Stomach (tissue), 19 donors: ENCODE measurements at regions of chr18 and their contacts with region 1.

Region 1: GRCh38 chr18:37385846-37386778 is 179.5 kb downstream of the CELF4 start:
- DNase-seq: no peak
- H3K4me3 ChIP-seq: no peak overlapping the region
- H3K27ac ChIP-seq: no peak overlapping the region
- H3K4me1 ChIP-seq: no peaks in the 10 kb centered on the region
- H3K27me3 ChIP-seq: peaks cover 0 to 15% (median 8%) of the 10 kb centered on the region in 3 donors
- CTCF ChIP-seq: peak in 4 of 7 experiments; percentile 47 to 91 (median 60)
- EP300 ChIP-seq: no peak
- POLR2A ChIP-seq: no peak

Region 2: DNA sequence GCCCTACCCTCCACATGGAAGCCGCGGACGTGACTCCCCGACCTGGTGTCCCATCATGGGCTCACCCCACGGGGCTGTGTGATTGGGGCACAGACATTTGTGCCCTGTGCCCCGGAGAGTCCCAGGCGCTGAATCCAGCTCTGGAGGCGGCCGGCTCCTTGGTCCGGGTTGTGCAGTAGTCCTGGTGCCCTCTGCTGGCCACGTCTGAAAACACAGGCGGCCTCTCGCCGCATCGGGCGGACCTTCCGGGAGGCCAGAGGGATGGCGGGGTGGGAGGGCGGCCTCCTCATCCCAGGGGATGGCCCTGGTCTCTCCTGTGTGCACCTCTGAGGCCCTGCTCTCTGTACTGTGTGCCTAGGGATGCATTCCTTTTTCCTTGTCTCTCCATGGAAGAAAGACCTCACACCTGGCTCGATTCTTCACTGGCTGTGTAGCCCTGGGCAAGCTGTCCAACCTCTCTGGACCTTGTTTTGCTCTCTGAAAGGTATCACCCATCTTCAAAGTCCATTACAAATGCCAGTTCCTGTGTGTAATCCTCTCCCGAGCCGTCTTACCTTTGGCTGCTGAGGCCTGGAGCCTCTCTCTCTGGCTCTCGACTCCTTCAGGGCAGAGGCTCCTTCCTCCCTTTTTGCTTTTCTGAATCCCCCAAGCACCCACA is 151.9 kb after region 1 on chr18:
- intact Hi-C with region 1: loop called (anchors 10 kb)
- DNase-seq: peak; percentile 78 to 91
- H3K4me3 ChIP-seq: no peak overlapping the region
- H3K27ac ChIP-seq: no peak overlapping the region
- H3K4me1 ChIP-seq: peaks cover 0 to 6% (median 3%) of the 10 kb centered on the region in 4 donors
- H3K27me3 ChIP-seq: peaks cover 4 to 89% (median 27%) of the 10 kb centered on the region in 3 donors
- CTCF ChIP-seq: peak in 5 of 7 experiments; percentile 60 to 91 (median 77)
- EP300 ChIP-seq: no peak
- POLR2A ChIP-seq: no peak